ENCODE measurements at regions of chr5 and their contacts with region 1.

Region 1: DNA sequence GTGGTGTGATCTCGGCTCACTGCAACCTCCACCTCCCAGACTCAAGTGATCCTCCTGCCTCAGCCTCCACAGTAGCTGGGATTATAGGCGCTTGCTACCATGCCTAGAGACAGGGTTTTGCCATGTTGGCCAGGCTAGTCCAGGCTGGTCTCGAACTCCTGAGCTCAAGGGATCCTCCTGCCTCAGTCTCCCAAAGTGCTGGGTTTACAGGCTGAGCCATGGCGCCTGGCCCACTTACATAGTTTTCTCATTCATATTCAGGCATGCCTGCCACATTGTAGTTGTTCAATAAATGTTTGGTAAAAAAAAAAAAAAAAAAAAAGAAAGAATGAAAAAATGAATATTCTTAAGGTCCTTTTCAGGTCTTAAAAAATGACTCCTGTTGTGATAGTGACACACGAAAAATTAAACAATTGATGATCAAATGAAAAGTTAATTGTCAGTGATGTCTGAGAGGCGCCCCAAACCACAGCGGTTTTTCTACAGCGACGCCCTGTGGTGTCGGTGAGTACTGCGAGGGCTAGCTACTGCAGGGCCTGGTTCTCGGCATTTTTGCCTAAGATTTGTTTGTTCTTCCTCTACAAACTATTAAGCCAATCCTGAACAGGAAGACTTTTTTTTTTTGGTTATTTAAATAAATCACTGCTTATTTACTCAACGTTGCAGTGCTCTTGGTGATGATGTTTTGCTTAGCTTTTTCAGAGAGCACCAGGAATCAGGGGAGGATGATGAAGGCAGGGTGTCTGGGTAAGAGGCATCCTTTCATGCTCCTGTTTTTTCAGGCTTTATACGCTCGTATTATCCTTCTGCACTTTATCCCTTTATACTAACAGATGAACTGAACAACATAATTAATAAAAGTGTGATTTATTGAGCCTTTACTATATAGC is 67.0 kb upstream of the DPYSL3 start:
- DNase-seq: peak; percentile 29
- ATAC-seq: peak; percentile 88
- H3K4me3 ChIP-seq: no peak overlapping the region
- H3K27ac ChIP-seq: no peak overlapping the region
- H3K4me1 ChIP-seq: peaks cover 2% of the 10 kb centered on the region; the same call in 1 of the 2 replicates
- H3K27me3 ChIP-seq: no peaks in the 10 kb centered on the region
- CTCF ChIP-seq: peak; percentile 80
- POLR2A ChIP-seq: no peak
- RAD21 ChIP-seq: peak; percentile 71

Region 2: GRCh38 chr5:146533260-146533857 is 1043.5 kb before region 1 on chr5:
- CTCF ChIA-PET with region 1: no interaction called
- POLR2A ChIA-PET with region 1: no interaction called
- dilution Hi-C with region 1: no loop called
- in situ Hi-C with region 1: loop called (anchors 25 kb)
- intact Hi-C with region 1: no loop called
- DNase-seq: peak; percentile 50
- ATAC-seq: peak; percentile 97
- H3K4me3 ChIP-seq: no peak overlapping the region
- H3K27ac ChIP-seq: no peak overlapping the region
- H3K4me1 ChIP-seq: no peaks in the 10 kb centered on the region
- H3K27me3 ChIP-seq: peaks cover 5% of the 10 kb centered on the region
- CTCF ChIP-seq: peak; percentile 80
- POLR2A ChIP-seq: no peak
- RAD21 ChIP-seq: peak; percentile 73

Region 3: GRCh38 chr5:147098233-147098790 is 478.6 kb before region 1 on chr5:
- CTCF ChIA-PET with region 1: interaction called, 7 read pairs
- POLR2A ChIA-PET with region 1: no interaction called
- dilution Hi-C with region 1: no loop called
- in situ Hi-C with region 1: no loop called
- intact Hi-C with region 1: loop called (anchors 2 kb)
- DNase-seq: peak; percentile 34
- ATAC-seq: peak; percentile 57
- H3K4me3 ChIP-seq: no peak overlapping the region
- H3K27ac ChIP-seq: no peak overlapping the region
- H3K4me1 ChIP-seq: no peaks in the 10 kb centered on the region
- H3K27me3 ChIP-seq: no peaks in the 10 kb centered on the region
- CTCF ChIP-seq: peak; percentile 55
- POLR2A ChIP-seq: no peak
- RAD21 ChIP-seq: peak; percentile 44

Region 4: GRCh38 chr5:147369742-147370374 is 207.0 kb before region 1 on chr5:
- CTCF ChIA-PET with region 1: interaction called, 4 read pairs
- POLR2A ChIA-PET with region 1: no interaction called
- dilution Hi-C with region 1: no loop called
- in situ Hi-C with region 1: no loop called
- intact Hi-C with region 1: loop called (anchors 1 kb)
- DNase-seq: peak; percentile 20
- ATAC-seq: peak; percentile 79
- H3K4me3 ChIP-seq: no peak overlapping the region
- H3K27ac ChIP-seq: no peak overlapping the region
- H3K4me1 ChIP-seq: peaks cover 2% of the 10 kb centered on the region; the same call in 1 of the 2 replicates
- H3K27me3 ChIP-seq: peaks cover 4% of the 10 kb centered on the region; the same call in 1 of the 2 replicates
- CTCF ChIP-seq: peak; percentile 68
- POLR2A ChIP-seq: no peak
- RAD21 ChIP-seq: peak; percentile 66

Region 5: DNA sequence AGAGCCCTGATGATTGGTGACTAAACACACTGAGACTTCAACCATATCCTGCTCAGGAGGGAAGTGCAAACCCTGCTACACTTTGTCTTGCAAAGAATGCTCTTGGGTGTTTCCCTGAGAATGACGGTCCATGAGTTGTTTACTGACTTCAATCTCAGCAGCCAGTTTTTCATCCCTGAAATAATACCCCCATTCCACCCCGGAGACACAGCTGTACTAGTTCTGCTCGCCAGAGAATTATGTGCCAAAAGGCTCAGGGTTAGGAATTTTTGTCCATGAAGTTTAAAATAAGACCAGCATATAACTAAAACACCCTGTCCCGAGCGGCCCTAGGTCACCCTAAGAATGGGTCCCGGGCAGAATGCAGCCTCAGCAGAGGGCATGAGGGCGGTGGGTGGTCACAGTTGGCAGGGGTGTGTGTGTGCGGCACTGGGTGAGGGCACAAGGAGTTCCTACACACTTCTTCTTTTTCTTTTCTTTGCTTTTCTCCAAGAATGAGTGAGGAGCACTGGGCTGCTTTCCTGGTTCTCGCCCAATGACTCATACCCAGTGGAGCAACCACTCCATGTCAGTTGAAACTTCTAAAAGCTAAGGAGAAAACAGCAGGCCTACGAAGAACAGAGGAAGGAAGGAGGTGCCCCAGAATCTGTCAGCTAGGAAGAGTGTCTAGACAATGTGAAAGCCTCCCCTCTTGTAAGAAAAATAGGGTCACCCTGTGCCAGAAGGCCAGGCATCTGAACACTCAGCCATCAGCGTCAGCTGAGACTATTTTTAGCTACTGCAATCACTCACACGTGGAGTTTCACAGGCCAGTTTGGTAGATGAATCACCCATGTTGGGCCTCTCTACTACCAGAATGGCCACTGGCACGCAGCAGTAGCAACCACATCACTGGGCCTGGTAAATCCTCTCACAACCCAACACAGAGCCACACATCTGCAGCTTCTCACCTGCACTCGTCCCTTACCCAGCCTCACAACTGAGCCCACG is 172.9 kb before region 1 on chr5:
- CTCF ChIA-PET with region 1: no interaction called
- POLR2A ChIA-PET with region 1: no interaction called
- dilution Hi-C with region 1: no loop called
- in situ Hi-C with region 1: no loop called
- intact Hi-C with region 1: no loop called
- DNase-seq: peak; percentile 99
- ATAC-seq: peak; percentile 81
- H3K4me3 ChIP-seq: peak overlapping the region; percentile 5; the same call in 1 of the 2 replicates
- H3K27ac ChIP-seq: peak overlapping the region; percentile 93
- H3K4me1 ChIP-seq: peaks cover 15% of the 10 kb centered on the region
- H3K27me3 ChIP-seq: no peaks in the 10 kb centered on the region
- CTCF ChIP-seq: no peak
- POLR2A ChIP-seq: peak; percentile 48; the same call in 1 of the 2 replicates
- RAD21 ChIP-seq: no peak; the same call in 1 of the 2 replicates

Region 6: DNA sequence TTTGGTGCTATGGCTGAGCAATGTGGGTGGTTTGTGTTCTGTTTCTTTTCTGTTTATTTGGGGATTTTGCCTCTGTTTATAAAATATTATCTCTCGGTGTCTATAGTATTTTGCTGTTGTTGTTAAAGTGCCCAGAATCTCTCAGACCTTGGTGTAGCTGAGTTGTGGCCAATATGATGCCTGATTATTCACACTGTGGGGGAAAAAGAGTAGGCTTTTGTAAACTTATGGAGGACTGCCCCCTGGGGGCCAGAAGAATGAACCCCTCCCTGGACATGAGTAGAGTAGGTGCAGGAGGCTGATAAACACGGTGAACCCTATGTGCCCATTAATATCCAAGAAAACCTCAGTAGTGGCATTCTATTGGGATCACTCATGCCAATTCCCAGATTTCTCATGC is 18.1 kb before region 1 on chr5:
- CTCF ChIA-PET with region 1: interaction called, 15 read pairs
- POLR2A ChIA-PET with region 1: no interaction called
- dilution Hi-C with region 1: no loop called
- in situ Hi-C with region 1: no loop called
- intact Hi-C with region 1: no loop called
- DNase-seq: peak; percentile 81
- ATAC-seq: peak; percentile 81
- H3K4me3 ChIP-seq: no peak overlapping the region
- H3K27ac ChIP-seq: no peak overlapping the region
- H3K4me1 ChIP-seq: no peaks in the 10 kb centered on the region
- H3K27me3 ChIP-seq: peaks cover 2% of the 10 kb centered on the region
- CTCF ChIP-seq: peak; percentile 92
- POLR2A ChIP-seq: no peak
- RAD21 ChIP-seq: peak; percentile 94

Region 7: GRCh38 chr5:147835386-147835798 is 258.5 kb after region 1 on chr5:
- CTCF ChIA-PET with region 1: no interaction called
- POLR2A ChIA-PET with region 1: no interaction called
- dilution Hi-C with region 1: no loop called
- in situ Hi-C with region 1: no loop called
- intact Hi-C with region 1: no loop called
- DNase-seq: no peak
- ATAC-seq: no peak
- H3K4me3 ChIP-seq: no peak overlapping the region
- H3K27ac ChIP-seq: no peak overlapping the region
- H3K4me1 ChIP-seq: no peaks in the 10 kb centered on the region
- H3K27me3 ChIP-seq: no peaks in the 10 kb centered on the region
- CTCF ChIP-seq: no peak
- POLR2A ChIP-seq: no peak
- RAD21 ChIP-seq: no peak